Activated T-helper 1 cell treated with anti-CD3 and anti-CD28 coated beads, Interleukin-12 subunit alpha, Interleukin-12 subunit beta, Interleukin-2, Interleukin-4 antibody, amounts not matched to agents 30 ng/mL and 10 ng/mL and 1 ng/mL, durations not matched to agents 14 hours and 24 hours and 36 hours (primary cell): ENCODE measurements at regions of chrX and their contacts with region 1.

Region 1: DNA sequence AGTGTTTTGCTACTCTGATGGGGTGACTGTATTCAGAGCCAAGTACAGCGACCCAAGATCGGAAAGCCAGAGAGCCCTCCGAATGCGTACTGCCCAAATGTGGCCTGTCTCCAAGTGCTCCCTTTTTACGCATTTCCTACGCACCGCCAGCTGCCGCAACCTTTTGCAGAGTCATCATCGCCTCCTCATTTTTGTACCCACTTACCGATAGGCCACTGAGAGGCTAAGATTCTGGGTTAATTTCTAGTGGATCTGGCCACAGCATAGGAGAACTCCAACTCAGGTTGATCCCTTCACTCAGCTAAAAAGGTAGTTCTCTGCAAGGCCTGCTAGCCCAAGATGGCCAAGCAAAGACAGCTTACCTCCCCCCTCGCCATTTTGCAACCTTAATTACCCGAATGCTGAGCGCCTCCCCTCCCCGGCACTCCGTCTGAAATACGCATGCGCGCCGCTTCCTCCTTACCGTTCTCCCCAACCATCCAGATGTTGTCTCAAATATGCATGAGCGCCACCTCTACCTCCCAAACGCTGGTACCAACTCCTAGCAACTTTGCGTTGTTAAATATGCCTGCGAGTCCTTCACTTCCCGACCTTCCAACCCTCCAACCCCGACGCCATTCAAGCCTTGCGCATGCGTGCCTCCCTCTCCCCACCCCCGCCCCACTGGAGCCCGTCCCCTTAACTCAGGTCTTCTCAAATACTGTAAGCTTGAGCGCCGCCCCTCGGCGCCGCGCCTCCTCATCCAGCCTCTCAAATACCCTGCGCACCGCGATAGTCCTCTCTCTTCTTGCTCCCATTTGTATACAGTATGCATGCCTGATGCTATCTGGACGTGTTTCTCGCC is 11.8 kb upstream of the ZCCHC13 start:
- DNase-seq: peak; percentile 67
- H3K4me3 Mint-ChIP-seq: peak overlapping the region; percentile 91
- H3K27ac Mint-ChIP-seq: peak overlapping the region; percentile 100
- H3K4me1 Mint-ChIP-seq: peaks cover 22% of the 10 kb centered on the region
- H3K27me3 Mint-ChIP-seq: no peaks in the 10 kb centered on the region

Region 2: DNA sequence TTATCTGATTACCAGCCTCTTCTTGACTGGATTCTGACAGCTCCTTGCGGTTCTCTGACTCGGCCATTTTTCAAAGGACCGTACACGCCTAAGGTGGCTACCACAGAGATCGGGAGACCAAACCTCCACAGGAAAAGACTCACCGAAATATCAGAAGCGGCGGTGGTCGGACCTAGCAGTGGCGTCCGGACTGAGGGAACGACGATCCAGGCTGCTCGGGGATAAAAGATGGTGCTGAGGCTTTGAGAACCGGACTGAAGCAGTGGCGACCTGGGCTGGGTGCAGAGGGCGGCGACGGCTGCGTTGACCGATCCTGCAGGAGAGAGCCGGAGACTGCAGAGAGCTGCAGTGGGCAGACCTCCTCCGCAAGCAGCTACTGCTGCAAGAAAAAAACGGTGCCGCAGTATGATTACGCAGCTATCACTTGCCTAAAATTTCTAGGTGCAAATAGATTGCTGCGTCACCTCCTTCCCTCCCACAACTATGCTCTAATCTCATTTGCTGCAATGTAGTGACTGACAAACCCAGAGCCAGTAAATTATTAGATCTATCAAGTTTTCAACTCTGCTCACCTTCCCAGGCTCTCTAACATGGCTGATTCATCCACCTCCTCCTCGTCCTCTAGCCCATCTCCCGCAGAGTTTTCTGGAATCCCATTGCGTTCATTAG is 1077.6 kb before region 1 on chrX and contains the start of gene NAP1L2:
- intact Hi-C with region 1: loop called (anchors 5 kb)
- DNase-seq: peak; percentile 14
- H3K4me3 Mint-ChIP-seq: peak within 1 kb of the TSS; percentile 89
- H3K27ac Mint-ChIP-seq: peak within 1 kb of the TSS; percentile 59
- H3K4me1 Mint-ChIP-seq: peaks cover 10% of the 10 kb centered on the region
- H3K27me3 Mint-ChIP-seq: peaks cover 7% of the 10 kb centered on the region
- total RNA-seq, gene NAP1L2: 1.7 and 1.8 TPM in 2 replicates

Region 3: GRCh38 chrX:73943693-73944562 is 348.3 kb before region 1 on chrX:
- intact Hi-C with region 1: loop called (anchors 1 kb)
- DNase-seq: peak; percentile 78
- H3K4me3 Mint-ChIP-seq: peak overlapping the region; percentile 96
- H3K27ac Mint-ChIP-seq: peak overlapping the region; percentile 89
- H3K4me1 Mint-ChIP-seq: peaks cover 7% of the 10 kb centered on the region
- H3K27me3 Mint-ChIP-seq: no peaks in the 10 kb centered on the region

Region 4: DNA sequence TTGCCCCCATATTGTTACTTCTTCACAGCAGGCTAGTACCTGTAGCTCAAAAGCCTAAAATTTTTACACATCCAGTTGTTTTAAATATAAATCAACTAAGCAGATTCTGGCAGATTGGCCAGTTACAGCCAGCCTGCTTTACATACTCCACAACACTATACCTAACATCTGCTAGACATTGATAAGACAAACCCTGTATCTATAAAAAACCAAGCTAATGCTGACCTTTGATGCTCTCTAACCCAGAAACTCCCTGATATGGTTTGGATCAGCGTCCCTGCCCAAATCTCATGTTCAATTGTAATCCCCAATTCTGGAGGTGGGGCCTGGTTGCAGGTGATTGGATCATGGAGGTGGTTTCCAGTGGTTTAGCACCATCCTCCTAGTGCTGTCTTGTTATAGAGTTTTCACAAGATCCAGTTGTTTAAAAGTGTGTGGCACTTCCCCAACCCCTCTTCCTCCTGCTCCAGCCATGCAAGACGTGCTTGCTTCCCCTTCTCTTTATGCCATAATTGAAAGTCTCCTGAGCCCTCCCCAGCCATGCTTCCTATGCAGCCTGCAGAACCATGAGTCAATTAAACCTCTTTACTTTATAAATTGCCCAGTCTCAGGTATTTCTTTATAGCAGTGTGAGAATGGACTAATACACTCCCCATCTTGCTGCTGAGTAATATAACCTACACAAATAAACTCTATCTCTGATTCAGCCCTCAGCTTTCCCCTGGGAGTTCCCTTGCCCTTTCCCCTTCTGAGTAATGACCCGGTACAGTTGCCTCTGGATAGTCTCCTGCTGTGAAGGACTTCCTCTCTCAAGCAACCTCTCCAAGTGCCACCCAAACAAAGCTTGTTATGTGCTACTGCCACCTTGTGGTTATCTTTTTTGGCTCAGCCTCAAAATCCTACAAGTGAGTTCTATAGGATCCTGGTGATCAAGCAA is 51.4 kb after region 1 on chrX:
- intact Hi-C with region 1: loop called (anchors 1 kb)
- DNase-seq: peak; percentile 21
- H3K4me3 Mint-ChIP-seq: no peak overlapping the region
- H3K27ac Mint-ChIP-seq: no peak overlapping the region
- H3K4me1 Mint-ChIP-seq: no peaks in the 10 kb centered on the region
- H3K27me3 Mint-ChIP-seq: no peaks in the 10 kb centered on the region

Region 5: DNA sequence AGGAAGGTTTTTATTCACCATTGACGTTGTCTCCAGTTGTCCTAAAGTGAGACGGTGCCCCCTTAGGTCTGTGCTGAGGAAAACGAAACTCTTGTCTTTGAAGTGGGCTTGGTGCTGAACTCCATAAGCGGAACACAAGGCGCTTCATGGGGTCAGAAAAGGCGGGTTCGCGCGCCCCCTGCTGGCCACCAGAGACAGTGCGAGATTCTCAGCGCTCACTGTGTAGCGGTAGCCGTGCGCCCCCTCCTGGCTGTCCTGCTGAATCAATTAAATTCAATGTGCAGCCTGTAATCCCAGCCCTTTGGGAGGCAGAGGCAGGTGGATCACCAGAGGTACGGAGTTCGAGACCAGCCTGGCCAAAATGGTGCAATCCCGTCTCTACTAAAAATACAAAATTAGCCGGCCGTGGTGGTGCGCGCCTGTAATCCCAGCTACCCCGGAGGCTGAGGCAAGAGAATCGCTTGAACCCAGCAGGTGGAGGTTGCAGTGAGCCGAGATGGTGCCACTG is 258.2 kb after region 1 on chrX:
- intact Hi-C with region 1: loop called (anchors 1 kb)
- DNase-seq: peak; percentile 66
- H3K4me3 Mint-ChIP-seq: no peak overlapping the region
- H3K27ac Mint-ChIP-seq: no peak overlapping the region
- H3K4me1 Mint-ChIP-seq: peaks cover 5% of the 10 kb centered on the region
- H3K27me3 Mint-ChIP-seq: no peaks in the 10 kb centered on the region

Region 6: GRCh38 chrX:75156021-75156945 is 864.1 kb after region 1 on chrX and contains the start of gene ABCB7:
- intact Hi-C with region 1: loop called (anchors 5 kb)
- DNase-seq: peak; percentile 52
- H3K4me3 Mint-ChIP-seq: peak within 1 kb of the TSS; percentile 100
- H3K27ac Mint-ChIP-seq: peak within 1 kb of the TSS; percentile 98
- H3K4me1 Mint-ChIP-seq: peaks cover 40% of the 10 kb centered on the region
- H3K27me3 Mint-ChIP-seq: no peaks in the 10 kb centered on the region
- total RNA-seq, gene ABCB7: 37.4 and 38.1 TPM in 2 replicates

Region 7: GRCh38 chrX:75337525-75337924 is 1045.3 kb after region 1 on chrX:
- intact Hi-C with region 1: no loop called
- DNase-seq: no peak
- H3K4me3 Mint-ChIP-seq: no peak overlapping the region
- H3K27ac Mint-ChIP-seq: no peak overlapping the region
- H3K4me1 Mint-ChIP-seq: no peaks in the 10 kb centered on the region
- H3K27me3 Mint-ChIP-seq: no peaks in the 10 kb centered on the region

Region 8: DNA sequence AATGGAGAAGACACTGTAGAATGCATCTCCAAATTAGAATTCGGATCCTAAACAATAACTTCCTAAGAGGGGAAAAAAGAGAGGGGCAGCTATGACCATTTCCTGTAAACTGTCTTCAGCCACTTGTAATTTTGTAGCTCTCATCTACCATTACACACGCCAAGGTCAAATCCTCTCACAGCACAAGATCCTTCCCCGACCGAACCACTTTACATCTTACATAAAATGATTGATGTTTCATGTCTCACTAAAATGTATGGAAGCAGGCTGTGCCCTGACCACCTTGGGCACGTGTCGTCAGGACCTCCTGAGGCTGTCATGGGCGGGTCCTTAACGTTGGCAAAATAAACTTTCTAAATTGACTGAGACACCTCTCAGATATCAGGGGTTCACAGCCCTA is 1856.6 kb after region 1 on chrX:
- intact Hi-C with region 1: loop called (anchors 5 kb)
- DNase-seq: peak; percentile 39
- H3K4me3 Mint-ChIP-seq: peak overlapping the region; percentile 86
- H3K27ac Mint-ChIP-seq: peak overlapping the region; percentile 99
- H3K4me1 Mint-ChIP-seq: peaks cover 17% of the 10 kb centered on the region
- H3K27me3 Mint-ChIP-seq: no peaks in the 10 kb centered on the region